ENCODE measurements at regions of chr12 and their contacts with region 1.

Region 1: GRCh38 chr12:119988782-119989668 is at the start of gene BICDL1:
- DNase-seq: peak; percentile 69
- ATAC-seq: peak; percentile 91
- H3K4me3 ChIP-seq: peak within 1 kb of the TSS; percentile 82
- H3K27ac ChIP-seq: no peak within 1 kb of the TSS
- H3K4me1 ChIP-seq: peaks cover 6% of the 10 kb centered on the region
- H3K27me3 ChIP-seq: no peaks in the 10 kb centered on the region
- CTCF ChIP-seq: peak in 1 of 3 experiments; percentile 16; a peak in 1 of 6 replicates
- EP300 ChIP-seq: no peak
- POLR2A ChIP-seq: peak; percentile 60
- RAD21 ChIP-seq: no peak
- polyA plus RNA-seq, gene BICDL1: 0.72 to 1.2 TPM

Region 2: GRCh38 chr12:120012067-120012621 is 23.1 kb after region 1 on chr12:
- CTCF ChIA-PET with region 1: interaction called, 3 read pairs
- POLR2A ChIA-PET with region 1: interaction called, 9 read pairs
- RAD21 ChIA-PET with region 1: interaction called, 36 read pairs
- SMC1A ChIA-PET with region 1: interaction called, 8 read pairs
- in situ Hi-C with region 1: no loop called
- intact Hi-C with region 1: no loop called
- DNase-seq: peak; percentile 93
- ATAC-seq: peak; percentile 89
- H3K4me3 ChIP-seq: peak overlapping the region; percentile 9; the same call in 1 of the 2 replicates
- H3K27ac ChIP-seq: 0 out of 2 replicates have a peak overlapping the region, but pooled peaks have one; percentile 17
- H3K4me1 ChIP-seq: peaks cover 29% of the 10 kb centered on the region
- H3K27me3 ChIP-seq: no peaks in the 10 kb centered on the region
- CTCF ChIP-seq: no peak
- EP300 ChIP-seq: peak; percentile 30 to 70; a peak in 2 of 4 replicates
- POLR2A ChIP-seq: no peak
- RAD21 ChIP-seq: no peak

Region 3: GRCh38 chr12:120194534-120195395 is 205.7 kb after region 1 on chr12 and contains the start of gene GCN1:
- CTCF ChIA-PET with region 1: no interaction called
- POLR2A ChIA-PET with region 1: interaction called, 7 read pairs
- RAD21 ChIA-PET with region 1: no interaction called
- SMC1A ChIA-PET with region 1: no interaction called
- in situ Hi-C with region 1: no loop called
- intact Hi-C with region 1: loop called (anchors 10 kb)
- DNase-seq: no peak
- ATAC-seq: peak; percentile 86
- H3K4me3 ChIP-seq: peak within 1 kb of the TSS; percentile 62
- H3K27ac ChIP-seq: peak within 1 kb of the TSS; percentile 93
- H3K4me1 ChIP-seq: peaks cover 33% of the 10 kb centered on the region
- H3K27me3 ChIP-seq: no peaks in the 10 kb centered on the region
- CTCF ChIP-seq: no peak
- EP300 ChIP-seq: no peak
- POLR2A ChIP-seq: peak; percentile 96
- RAD21 ChIP-seq: no peak
- polyA plus RNA-seq, gene GCN1: 10.8 to 12.1 TPM

Measured in GM12878 (cell line).